ENCODE measurements at regions of chr1 and their contacts with region 1.

Region 1: GRCh38 chr1:172398970-172399755 is 21.3 kb upstream of the C1orf105 start:
- DNase-seq: peak; percentile 35
- ATAC-seq: peak; percentile 53
- H3K4me3 Mint-ChIP-seq: peak overlapping the region; percentile 29
- H3K27ac Mint-ChIP-seq: peak overlapping the region; percentile 70
- H3K4me1 Mint-ChIP-seq: peaks cover 74% of the 10 kb centered on the region
- H3K27me3 Mint-ChIP-seq: no peaks in the 10 kb centered on the region

Region 2: DNA sequence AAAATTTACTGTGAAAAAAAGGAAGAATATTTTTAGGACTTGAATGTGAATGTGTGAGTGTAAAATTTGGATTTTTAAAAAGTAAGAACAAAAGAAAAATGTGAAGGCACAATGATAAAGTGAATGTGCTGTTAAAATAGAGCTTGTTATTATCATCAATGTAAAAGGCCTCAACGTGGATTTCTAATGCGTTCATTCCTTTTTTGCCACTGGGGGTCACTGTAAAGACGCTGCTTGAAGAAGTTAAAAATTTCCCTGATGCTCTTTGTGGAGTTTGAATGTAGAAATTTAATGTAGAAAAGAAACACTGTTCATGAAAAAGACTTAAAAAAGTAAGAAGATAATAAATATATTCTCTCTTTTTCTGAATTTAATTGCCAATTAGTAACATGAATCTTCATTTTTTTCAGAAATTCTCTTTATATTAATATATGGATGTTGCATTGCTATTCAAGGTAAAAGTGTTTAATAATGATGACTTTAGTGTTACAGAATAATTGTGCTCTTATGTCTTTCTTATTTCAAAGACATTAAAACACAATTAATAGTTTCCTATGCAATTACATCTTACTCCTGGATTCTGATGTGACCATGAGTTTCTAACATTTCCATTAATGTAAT is 396.3 kb before region 1 on chr1:
- CTCF ChIA-PET with region 1: interaction called, 20 read pairs
- POLR2A ChIA-PET with region 1: no interaction called
- intact Hi-C with region 1: loop called (anchors 1 to 2 kb)
- DNase-seq: peak; percentile 33
- ATAC-seq: no peak
- H3K4me3 Mint-ChIP-seq: no peak overlapping the region
- H3K27ac Mint-ChIP-seq: no peak overlapping the region
- H3K4me1 Mint-ChIP-seq: no peaks in the 10 kb centered on the region
- H3K27me3 Mint-ChIP-seq: no peaks in the 10 kb centered on the region

Region 3: DNA sequence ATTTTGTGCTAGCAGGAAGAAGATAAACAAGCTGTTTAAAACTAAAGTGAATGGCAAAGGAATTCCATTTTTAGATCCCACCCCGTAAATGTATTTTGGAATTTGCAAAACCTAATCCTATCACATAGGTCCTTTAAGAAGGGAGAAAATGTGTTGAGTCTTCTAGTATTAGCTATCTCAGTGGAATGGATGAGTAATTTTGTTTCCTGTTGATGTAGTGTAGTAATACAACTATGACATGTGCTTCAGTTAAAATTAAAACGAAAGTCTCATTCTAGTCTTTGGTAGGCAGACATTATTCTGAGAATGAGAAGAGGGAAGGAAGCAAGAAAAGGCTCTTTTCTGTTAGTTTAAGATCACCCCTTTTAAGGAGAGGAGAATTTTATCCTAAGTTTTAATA is 244.6 kb before region 1 on chr1:
- CTCF ChIA-PET with region 1: interaction called, 3 read pairs
- POLR2A ChIA-PET with region 1: no interaction called
- intact Hi-C with region 1: loop called in 1 of 2 experiments (anchors 2 kb)
- DNase-seq: no peak
- ATAC-seq: peak; percentile 100
- H3K4me3 Mint-ChIP-seq: no peak overlapping the region
- H3K27ac Mint-ChIP-seq: peak overlapping the region; percentile 90
- H3K4me1 Mint-ChIP-seq: peaks cover 9% of the 10 kb centered on the region
- H3K27me3 Mint-ChIP-seq: no peaks in the 10 kb centered on the region

Region 4: GRCh38 chr1:172338295-172338735 is 60.8 kb before region 1 on chr1:
- CTCF ChIA-PET with region 1: interaction called, 20 read pairs
- POLR2A ChIA-PET with region 1: interaction called, 9 read pairs
- intact Hi-C with region 1: loop called (anchors 1 kb)
- DNase-seq: peak; percentile 82
- ATAC-seq: peak; percentile 88
- H3K4me3 Mint-ChIP-seq: no peak overlapping the region
- H3K27ac Mint-ChIP-seq: peak overlapping the region; percentile 30
- H3K4me1 Mint-ChIP-seq: peaks cover 48% of the 10 kb centered on the region
- H3K27me3 Mint-ChIP-seq: peaks cover 2% of the 10 kb centered on the region

Region 5: GRCh38 chr1:172380441-172381244 is 18.5 kb before region 1 on chr1:
- CTCF ChIA-PET with region 1: interaction called, 6 read pairs
- POLR2A ChIA-PET with region 1: no interaction called
- intact Hi-C with region 1: loop called (anchors 1 to 2 kb)
- DNase-seq: peak; percentile 32
- ATAC-seq: peak; percentile 98
- H3K4me3 Mint-ChIP-seq: peak overlapping the region; percentile 43
- H3K27ac Mint-ChIP-seq: peak overlapping the region; percentile 91
- H3K4me1 Mint-ChIP-seq: peaks cover 31% of the 10 kb centered on the region
- H3K27me3 Mint-ChIP-seq: no peaks in the 10 kb centered on the region

Region 6: GRCh38 chr1:172429331-172430127 is 30.4 kb after region 1 on chr1:
- CTCF ChIA-PET with region 1: interaction called, 11 read pairs
- POLR2A ChIA-PET with region 1: no interaction called
- intact Hi-C with region 1: no loop called
- DNase-seq: peak; percentile 66
- ATAC-seq: peak; percentile 71
- H3K4me3 Mint-ChIP-seq: no peak overlapping the region
- H3K27ac Mint-ChIP-seq: no peak overlapping the region
- H3K4me1 Mint-ChIP-seq: peaks cover 30% of the 10 kb centered on the region
- H3K27me3 Mint-ChIP-seq: no peaks in the 10 kb centered on the region

Region 7: DNA sequence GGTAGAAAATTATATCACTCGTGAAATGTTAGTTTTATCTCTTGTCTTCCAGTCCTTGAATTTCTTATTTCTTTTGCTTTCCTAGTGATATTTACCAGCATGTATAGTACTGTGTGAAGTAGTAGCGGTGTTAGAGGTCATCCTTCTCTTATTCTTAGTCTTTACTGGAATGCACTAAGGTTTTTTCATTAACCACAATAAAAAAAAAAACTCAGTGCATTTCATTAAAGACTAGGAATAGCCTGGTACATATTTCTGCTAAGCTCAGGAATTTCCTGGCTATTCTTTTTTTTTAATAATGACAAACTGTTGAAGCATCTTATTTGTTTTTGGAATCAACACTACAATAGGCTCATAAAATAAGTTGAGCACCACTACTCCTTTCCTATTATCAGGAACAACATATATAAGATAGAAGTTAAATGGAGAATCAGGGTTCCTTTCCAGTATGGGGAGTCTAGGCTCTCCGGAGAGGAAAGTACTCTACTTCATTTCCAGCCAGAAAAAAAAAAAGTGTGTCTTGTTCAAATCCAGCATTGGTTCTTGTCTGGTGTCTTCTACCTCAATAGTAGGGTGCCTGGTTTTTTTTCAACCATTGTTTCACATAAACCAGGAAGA is 591.5 kb after region 1 on chr1:
- CTCF ChIA-PET with region 1: no interaction called
- POLR2A ChIA-PET with region 1: no interaction called
- intact Hi-C with region 1: no loop called
- DNase-seq: no peak
- ATAC-seq: no peak
- H3K4me3 Mint-ChIP-seq: no peak overlapping the region
- H3K27ac Mint-ChIP-seq: no peak overlapping the region
- H3K4me1 Mint-ChIP-seq: no peaks in the 10 kb centered on the region
- H3K27me3 Mint-ChIP-seq: no peaks in the 10 kb centered on the region

Measured in activated CD4-positive, alpha-beta T cell treated with anti-CD3 and anti-CD28 coated beads for 36 hours (primary cell).